Activated naive CD4-positive, alpha-beta T cell treated with anti-CD3 and anti-CD28 coated beads for 36 hours (primary cell): ENCODE measurements at regions of chr10 and their contacts with region 1.

Region 1: DNA sequence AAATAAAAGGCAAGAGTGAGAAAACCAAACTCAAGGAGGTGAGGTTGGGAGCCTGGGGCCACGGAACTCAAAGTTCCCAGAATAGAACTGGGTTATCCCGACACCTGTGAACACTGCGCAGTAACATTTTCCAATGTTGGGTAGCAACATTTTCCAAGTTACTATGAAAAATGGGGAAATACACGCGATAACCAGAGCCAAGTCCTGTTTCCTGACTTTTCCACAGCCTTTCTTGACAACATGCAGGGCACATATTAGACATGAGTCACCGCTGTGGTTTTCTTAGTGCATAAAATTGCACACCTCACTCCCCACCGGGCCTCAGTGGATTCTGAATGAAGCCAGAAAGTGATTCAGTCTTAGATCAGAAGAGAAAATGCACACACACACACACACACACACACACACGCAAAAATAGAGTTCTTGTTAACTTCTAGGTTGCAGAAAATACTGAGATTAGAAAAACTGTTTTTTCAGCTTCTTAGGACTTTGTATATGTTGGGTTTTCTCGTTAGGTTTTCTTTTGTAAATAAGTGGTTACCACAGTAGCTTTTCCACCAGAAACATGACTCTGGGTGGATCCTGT is 70.0 kb downstream of the CAMK1D start:
- DNase-seq: peak; percentile 90
- H3K4me3 Mint-ChIP-seq: no peak overlapping the region
- H3K27ac Mint-ChIP-seq: peak overlapping the region; percentile 46
- H3K4me1 Mint-ChIP-seq: peaks cover 30% of the 10 kb centered on the region
- H3K27me3 Mint-ChIP-seq: no peaks in the 10 kb centered on the region

Region 2: DNA sequence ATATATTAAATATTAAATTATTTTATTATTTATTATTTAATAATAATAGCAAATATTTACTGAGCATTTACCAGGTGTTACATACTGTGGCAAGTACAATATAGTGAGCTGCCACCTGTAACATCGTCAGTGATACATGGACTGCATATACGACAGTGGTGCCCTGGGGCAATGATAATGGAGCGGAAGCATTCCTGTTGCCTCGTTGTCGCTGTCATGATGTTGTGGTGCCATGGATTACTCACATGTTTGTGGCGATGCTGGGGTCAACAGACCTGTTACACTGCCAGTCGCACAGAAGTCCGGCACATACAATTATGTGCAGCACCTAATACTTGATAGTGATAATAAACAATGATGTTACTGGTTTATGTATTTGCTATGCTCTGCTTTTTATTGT is 49.4 kb before region 1 on chr10:
- CTCF ChIA-PET with region 1: no interaction called
- intact Hi-C with region 1: loop called (anchors 2 kb)
- DNase-seq: no peak
- H3K4me3 Mint-ChIP-seq: no peak overlapping the region
- H3K27ac Mint-ChIP-seq: no peak overlapping the region
- H3K4me1 Mint-ChIP-seq: peaks cover 26% of the 10 kb centered on the region
- H3K27me3 Mint-ChIP-seq: no peaks in the 10 kb centered on the region

Region 3: GRCh38 chr10:12405342-12406320 is 13.7 kb before region 1 on chr10:
- CTCF ChIA-PET with region 1: interaction called, 3 read pairs
- intact Hi-C with region 1: loop called (anchors 2 kb)
- DNase-seq: no peak
- H3K4me3 Mint-ChIP-seq: no peak overlapping the region
- H3K27ac Mint-ChIP-seq: peak overlapping the region; percentile 14
- H3K4me1 Mint-ChIP-seq: peaks cover 27% of the 10 kb centered on the region
- H3K27me3 Mint-ChIP-seq: no peaks in the 10 kb centered on the region